Activated naive CD4-positive, alpha-beta T cell treated with anti-CD3 and anti-CD28 coated beads for 36 hours (primary cell): ENCODE measurements at regions of chr16 and their contacts with region 1.

Region 1: DNA sequence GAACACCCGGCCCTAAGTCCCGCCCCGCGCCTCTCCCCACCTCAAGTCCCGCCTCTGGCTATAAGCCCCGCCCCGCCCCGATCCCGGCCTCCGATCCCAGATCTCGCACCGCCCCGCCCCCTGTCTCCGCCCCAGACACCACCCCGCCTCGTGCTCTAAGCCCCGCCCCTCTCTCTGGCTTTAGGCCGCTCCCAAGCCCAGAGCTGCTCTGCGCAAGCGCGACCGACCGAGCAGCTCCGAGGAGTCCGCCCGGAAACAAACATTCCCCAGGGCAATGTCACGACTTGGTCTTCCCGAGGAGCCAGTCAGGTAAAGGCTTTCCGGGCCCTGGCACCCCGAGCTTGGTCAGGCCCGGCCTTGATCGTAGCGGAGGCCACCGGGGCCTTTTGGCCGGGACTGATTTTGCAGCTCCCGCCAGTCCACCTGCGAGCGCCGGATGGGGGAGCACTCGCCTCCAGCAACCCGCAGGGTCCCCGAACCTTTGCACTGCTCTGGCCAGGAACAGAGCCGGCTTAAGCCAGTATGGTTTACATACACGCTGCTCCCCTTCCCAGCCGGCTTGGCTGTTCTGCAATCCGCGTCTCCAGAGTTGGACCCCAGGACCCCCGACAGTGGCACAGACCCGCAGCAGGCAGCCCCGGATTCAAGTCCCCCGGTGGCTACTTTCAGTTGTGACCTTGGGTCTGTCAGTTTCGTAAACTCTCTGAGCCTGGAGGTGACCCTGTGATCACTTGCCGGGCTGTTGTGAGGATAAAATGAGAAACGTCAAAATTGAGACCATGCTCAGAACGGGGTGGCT is at the start of gene NUDT7:
- DNase-seq: peak; percentile 99
- H3K4me3 Mint-ChIP-seq: peak within 1 kb of the TSS; percentile 81
- H3K27ac Mint-ChIP-seq: peak within 1 kb of the TSS; percentile 75
- H3K4me1 Mint-ChIP-seq: peaks cover 8% of the 10 kb centered on the region
- H3K27me3 Mint-ChIP-seq: no peaks in the 10 kb centered on the region
- total RNA-seq, gene NUDT7: 9.4 to 9.8 TPM

Region 2: DNA sequence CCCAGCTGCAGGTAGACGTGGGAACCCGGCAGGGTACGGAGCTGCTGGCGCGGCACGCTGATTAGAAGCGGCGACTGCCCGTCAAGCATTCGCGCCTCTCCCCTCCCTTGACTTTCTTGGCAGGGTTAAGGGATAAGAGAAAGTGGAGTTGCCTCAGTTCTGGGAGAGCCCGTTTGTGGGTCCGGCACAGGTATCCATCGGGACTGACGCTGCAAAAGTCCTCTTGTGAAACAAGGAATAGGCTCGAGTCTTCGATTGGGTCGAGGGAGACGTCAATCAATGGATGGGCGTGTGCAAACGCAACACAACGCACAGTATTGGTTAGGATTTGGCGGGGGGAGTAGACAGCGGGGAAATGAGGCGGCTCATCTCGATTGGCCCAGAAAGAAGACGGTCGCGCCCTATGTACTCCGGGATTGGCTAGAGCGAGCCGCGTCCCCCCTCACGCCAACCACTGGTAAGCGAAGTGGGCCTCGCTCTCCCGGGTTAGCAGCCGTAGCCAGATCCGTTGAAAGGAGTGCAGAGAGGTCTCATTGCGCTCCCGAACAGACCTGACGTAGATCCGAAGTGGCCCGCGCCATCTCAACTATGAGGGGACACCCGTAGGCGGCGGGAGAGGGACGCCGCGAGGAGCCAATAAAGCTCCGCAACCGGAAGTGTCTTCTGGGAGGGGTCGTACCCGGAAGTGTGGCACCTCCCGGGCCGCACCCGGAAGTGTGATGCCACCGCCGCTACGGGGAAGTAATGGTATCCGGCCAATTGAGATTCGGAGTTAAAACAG is 531.8 kb before region 1 on chr16 and contains the start of gene MON1B:
- CTCF ChIA-PET with region 1: no interaction called
- intact Hi-C with region 1: loop called (anchors 1 kb)
- DNase-seq: peak; percentile 96
- H3K4me3 Mint-ChIP-seq: peak within 1 kb of the TSS; percentile 82
- H3K27ac Mint-ChIP-seq: peak within 1 kb of the TSS; percentile 99
- H3K4me1 Mint-ChIP-seq: peaks cover 29% of the 10 kb centered on the region
- H3K27me3 Mint-ChIP-seq: no peaks in the 10 kb centered on the region
- total RNA-seq, gene MON1B: 69.6 to 71.0 TPM

Region 3: DNA sequence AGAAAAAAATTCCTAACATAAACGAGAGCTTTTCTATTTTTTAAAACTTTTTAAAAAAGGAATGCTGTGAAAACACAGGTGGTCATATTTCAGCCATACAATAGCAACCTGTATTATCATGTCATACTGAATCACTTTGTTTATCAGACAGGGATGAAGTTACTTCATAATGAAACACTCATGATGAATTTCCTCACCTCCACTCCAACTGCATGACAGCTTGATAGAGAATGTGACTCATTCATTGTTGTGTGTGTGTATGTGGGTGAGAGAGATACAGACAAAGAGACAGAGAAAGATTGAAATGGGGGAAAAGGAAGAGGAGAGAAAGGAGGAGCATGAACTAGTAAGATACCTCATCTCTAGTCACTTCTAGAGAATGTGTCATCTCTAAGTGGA is 414.3 kb before region 1 on chr16:
- CTCF ChIA-PET with region 1: no interaction called
- intact Hi-C with region 1: loop called (anchors 1 kb)
- DNase-seq: peak; percentile 10
- H3K4me3 Mint-ChIP-seq: no peak overlapping the region
- H3K27ac Mint-ChIP-seq: peak overlapping the region; percentile 83
- H3K4me1 Mint-ChIP-seq: peaks cover 19% of the 10 kb centered on the region
- H3K27me3 Mint-ChIP-seq: peaks cover 20% of the 10 kb centered on the region

Region 4: DNA sequence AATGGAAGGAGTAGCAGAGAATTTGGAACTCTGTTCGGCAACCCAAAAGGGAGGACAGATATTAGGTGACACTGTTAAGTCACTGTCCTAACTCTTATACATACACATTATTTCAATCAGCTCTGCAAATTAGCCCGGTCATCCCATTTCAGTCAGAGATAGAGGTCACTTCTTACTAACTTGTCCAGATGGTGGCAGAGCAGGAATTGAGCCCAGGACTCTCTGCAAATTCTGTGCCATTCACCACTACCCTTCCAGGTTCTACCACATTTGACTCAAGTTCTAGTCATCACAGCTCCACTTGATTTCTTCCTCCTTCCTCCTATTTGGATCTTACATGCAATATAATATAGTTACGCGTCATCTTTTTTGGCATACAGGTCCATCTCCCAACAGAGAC is 36.1 kb before region 1 on chr16:
- CTCF ChIA-PET with region 1: no interaction called
- intact Hi-C with region 1: no loop called
- DNase-seq: no peak
- H3K4me3 Mint-ChIP-seq: no peak overlapping the region
- H3K27ac Mint-ChIP-seq: no peak overlapping the region
- H3K4me1 Mint-ChIP-seq: no peaks in the 10 kb centered on the region
- H3K27me3 Mint-ChIP-seq: peaks cover 11% of the 10 kb centered on the region

Region 5: GRCh38 chr16:77711775-77712174 is 10.7 kb before region 1 on chr16:
- CTCF ChIA-PET with region 1: no interaction called
- intact Hi-C with region 1: no loop called
- DNase-seq: no peak
- H3K4me3 Mint-ChIP-seq: no peak overlapping the region
- H3K27ac Mint-ChIP-seq: no peak overlapping the region
- H3K4me1 Mint-ChIP-seq: no peaks in the 10 kb centered on the region
- H3K27me3 Mint-ChIP-seq: peaks cover 3% of the 10 kb centered on the region

Region 6: GRCh38 chr16:77788181-77789084 is 65.9 kb after region 1 on chr16 and contains the start of gene VAT1L:
- CTCF ChIA-PET with region 1: interaction called, 3 read pairs
- intact Hi-C with region 1: loop called (anchors 2 kb)
- DNase-seq: peak; percentile 5
- H3K4me3 Mint-ChIP-seq: peak within 1 kb of the TSS; percentile 66
- H3K27ac Mint-ChIP-seq: no peak within 1 kb of the TSS
- H3K4me1 Mint-ChIP-seq: peaks cover 7% of the 10 kb centered on the region
- H3K27me3 Mint-ChIP-seq: peaks cover 63% of the 10 kb centered on the region
- total RNA-seq, gene VAT1L: not detected

Region 7: DNA sequence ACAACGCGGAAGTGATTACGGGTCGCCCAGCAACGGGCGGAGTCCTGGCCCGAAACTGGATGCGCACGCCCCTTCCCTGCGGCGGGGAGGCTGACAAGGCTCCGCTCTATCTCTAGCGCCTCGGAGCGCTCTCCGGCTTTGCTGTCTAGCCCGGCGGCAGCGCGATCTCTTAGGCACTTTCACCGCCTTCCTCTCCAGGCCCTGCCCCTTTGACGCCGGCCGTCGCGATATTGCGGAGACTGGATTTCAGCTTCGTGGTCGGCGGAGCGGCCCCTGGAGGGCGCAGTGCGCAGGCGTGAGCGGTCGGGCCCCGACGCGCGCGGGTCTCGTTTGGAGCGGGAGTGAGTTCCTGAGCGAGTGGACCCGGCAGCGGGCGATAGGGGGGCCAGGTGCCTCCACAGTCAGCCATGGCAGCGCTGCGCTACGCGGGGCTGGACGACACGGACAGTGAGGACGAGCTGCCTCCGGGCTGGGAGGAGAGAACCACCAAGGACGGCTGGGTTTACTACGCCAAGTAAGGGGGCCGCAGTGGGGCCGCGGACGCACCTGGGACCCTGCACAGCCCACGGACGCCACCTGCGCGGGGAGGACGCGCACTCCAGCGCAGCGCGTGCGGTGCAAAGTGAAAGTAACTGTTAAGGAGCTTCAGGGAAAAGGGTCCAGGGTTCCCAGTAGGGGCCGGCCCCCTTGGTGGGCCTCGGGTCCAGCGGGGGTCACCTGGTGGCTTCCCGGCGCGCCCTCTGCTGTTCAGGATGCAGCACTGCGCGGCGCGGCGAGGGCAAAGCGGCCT is 377.1 kb after region 1 on chr16 and contains the start of gene WWOX:
- CTCF ChIA-PET with region 1: no interaction called
- intact Hi-C with region 1: loop called (anchors 1 kb)
- DNase-seq: peak; percentile 95
- H3K4me3 Mint-ChIP-seq: peak within 1 kb of the TSS; percentile 84
- H3K27ac Mint-ChIP-seq: peak within 1 kb of the TSS; percentile 88
- H3K4me1 Mint-ChIP-seq: peaks cover 24% of the 10 kb centered on the region
- H3K27me3 Mint-ChIP-seq: peaks cover 3% of the 10 kb centered on the region
- total RNA-seq, gene WWOX: 20.2 to 21.4 TPM